Ascending aorta (tissue), 2 donors: ENCODE measurements at regions of chr5 and their contacts with region 1.

Region 1: DNA sequence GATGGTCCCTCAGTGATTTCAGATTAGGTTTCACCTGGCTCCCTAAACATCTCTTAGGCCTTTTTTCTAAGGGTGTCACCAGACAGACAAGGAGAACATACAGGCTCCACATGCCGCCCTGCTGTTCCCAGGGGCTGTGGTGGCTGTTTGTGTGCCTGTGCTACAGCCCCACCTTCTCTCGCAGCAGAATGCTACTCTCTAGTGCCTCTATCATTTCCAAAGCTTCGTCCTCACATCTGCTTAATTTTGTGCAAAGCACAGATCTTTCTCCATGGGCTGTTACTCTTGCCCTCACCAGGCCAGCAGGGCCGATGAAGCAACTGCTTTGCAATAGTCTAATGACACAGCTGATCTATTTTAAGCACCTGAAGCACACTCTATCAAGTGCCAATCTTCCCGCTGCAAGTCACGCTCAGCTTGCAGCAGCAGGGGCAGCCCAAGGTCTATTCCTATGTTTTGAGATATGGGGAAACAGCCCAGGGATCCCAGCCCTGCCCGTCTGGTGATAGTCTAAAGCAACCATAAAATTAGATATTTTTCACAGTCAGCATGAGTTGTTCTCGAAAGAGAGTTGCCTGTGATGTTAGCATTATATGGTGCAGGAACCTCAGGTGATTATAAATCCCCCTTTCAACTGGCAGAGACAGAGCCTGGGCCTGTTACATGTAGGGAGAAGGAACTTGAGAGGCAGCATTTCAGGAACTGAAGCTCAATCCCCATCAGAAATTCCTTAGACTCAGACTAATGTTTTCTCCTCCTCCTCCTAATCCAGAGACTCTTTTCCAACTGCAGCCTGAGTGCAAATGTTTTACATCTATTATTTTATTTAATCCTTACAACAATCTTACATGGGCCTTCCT is 12.7 kb downstream of the ABLIM3 start:
- DNase-seq: peak; percentile 51 to 87
- H3K4me3 ChIP-seq: no peak overlapping the region
- H3K27ac ChIP-seq: peak overlapping the region; percentile 62 to 69
- H3K4me1 ChIP-seq: peaks cover 11 to 27% of the 10 kb centered on the region in 2 donors
- H3K27me3 ChIP-seq: no peaks in the 10 kb centered on the region
- CTCF ChIP-seq: no peak

Region 2: GRCh38 chr5:148336704-148337435 is 817.1 kb before region 1 on chr5:
- intact Hi-C with region 1: no loop called
- DNase-seq: no peak
- H3K4me3 ChIP-seq: no peak overlapping the region
- H3K27ac ChIP-seq: no peak overlapping the region
- H3K4me1 ChIP-seq: no peaks in the 10 kb centered on the region
- H3K27me3 ChIP-seq: no peaks in the 10 kb centered on the region
- CTCF ChIP-seq: no peak

Region 3: DNA sequence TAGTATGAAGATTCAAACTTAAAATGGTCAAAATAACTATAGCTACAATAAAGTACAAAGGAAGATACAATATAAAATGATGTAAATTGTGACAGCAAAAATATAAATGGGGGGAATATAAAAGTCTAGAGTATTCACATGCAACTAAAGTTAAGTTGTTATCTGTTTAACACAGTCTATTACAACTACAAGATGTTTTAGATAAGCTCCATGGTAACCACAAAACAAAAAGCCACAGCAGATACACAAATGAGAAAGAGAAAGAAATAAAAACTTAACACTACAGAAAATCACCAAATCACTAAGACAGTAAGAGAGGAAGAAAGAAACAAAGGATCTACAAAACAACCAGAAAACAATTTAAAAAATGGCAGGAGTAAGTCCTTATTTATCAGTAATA is 74.1 kb before region 1 on chr5:
- intact Hi-C with region 1: no loop called
- DNase-seq: no peak
- H3K4me3 ChIP-seq: no peak overlapping the region
- H3K27ac ChIP-seq: no peak overlapping the region
- H3K4me1 ChIP-seq: no peaks in the 10 kb centered on the region
- H3K27me3 ChIP-seq: no peaks in the 10 kb centered on the region
- CTCF ChIP-seq: no peak

Region 4: DNA sequence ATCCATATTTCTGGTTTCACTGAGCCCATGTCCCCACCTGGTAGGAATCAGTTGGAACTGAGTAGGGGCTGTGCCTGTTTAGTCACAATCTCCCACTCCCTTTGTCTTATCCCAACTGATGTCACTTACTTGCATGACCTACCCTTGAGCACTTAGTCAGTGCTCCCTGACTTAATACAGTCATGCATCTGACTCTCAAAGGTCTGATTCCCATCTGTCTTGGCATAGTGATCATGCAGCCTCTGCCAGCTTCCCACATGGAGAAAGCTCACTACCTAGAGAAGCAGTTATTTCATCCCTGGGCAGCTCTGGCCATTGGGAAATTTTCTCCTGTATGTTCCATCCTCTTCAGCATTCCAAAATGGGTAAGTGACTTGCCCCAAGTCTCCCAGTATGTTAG is 12.1 kb after region 1 on chr5:
- intact Hi-C with region 1: loop called (anchors 2 kb)
- DNase-seq: no peak
- H3K4me3 ChIP-seq: no peak overlapping the region
- H3K27ac ChIP-seq: peak overlapping the region in 1 of 2 donors; percentile 26
- H3K4me1 ChIP-seq: peaks cover 0 to 7% of the 10 kb centered on the region in 2 donors
- H3K27me3 ChIP-seq: no peaks in the 10 kb centered on the region
- CTCF ChIP-seq: no peak

Region 5: GRCh38 chr5:149175346-149176105 is 21.5 kb after region 1 on chr5:
- intact Hi-C with region 1: loop called (anchors 2 kb)
- DNase-seq: peak in 1 of 2 donors; percentile 72
- H3K4me3 ChIP-seq: no peak overlapping the region
- H3K27ac ChIP-seq: peak overlapping the region; percentile 77 to 79
- H3K4me1 ChIP-seq: peaks cover 12 to 17% of the 10 kb centered on the region in 2 donors
- H3K27me3 ChIP-seq: no peaks in the 10 kb centered on the region
- CTCF ChIP-seq: no peak

Region 6: DNA sequence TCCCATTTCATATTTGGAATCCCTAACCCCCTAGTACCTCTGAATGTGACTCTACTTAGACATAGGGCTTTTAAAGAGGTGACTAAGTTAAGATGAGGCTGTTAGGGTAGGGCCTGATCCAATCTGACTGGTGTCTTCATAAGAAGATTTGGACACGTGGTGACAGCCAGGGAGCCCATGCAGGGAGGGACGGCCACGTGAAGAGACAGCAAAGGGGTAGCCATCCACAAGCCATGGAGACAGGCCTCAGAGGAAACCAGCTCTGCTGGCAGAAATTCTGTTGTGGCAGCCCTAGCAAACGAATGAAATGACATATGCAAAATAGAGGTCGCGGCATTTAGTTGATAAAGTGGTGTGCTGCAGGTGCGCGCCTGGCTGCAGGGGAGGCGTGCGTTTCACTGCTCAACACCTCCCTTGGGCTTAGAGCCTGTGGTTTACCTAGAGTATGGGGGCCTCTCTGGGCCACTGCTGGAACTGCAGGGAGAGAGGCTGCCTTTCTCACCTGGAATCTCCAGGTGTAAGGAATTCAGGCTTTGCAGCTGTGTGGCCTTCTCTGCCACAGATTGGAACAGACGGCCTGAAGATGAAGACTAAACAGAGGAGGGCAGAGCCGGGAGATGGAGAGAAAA is 110.6 kb after region 1 on chr5:
- intact Hi-C with region 1: no loop called
- DNase-seq: no peak
- H3K4me3 ChIP-seq: no peak overlapping the region
- H3K27ac ChIP-seq: no peak overlapping the region
- H3K4me1 ChIP-seq: no peaks in the 10 kb centered on the region
- H3K27me3 ChIP-seq: no peaks in the 10 kb centered on the region
- CTCF ChIP-seq: peak in 1 of 3 experiments; percentile 13